Thyroid gland (tissue), 4 donors: ENCODE measurements at regions of chr17 and their contacts with region 1.

Region 1: GRCh38 chr17:4891411-4892342 is 7.7 kb upstream of the C17orf107 start:
- DNase-seq: no peak
- H3K4me3 ChIP-seq: no peak overlapping the region
- H3K27ac ChIP-seq: no peak overlapping the region
- H3K4me1 ChIP-seq: no peaks in the 10 kb centered on the region
- H3K27me3 ChIP-seq: no peaks in the 10 kb centered on the region
- CTCF ChIP-seq: no peak
- POLR2A ChIP-seq: no peak

Region 2: DNA sequence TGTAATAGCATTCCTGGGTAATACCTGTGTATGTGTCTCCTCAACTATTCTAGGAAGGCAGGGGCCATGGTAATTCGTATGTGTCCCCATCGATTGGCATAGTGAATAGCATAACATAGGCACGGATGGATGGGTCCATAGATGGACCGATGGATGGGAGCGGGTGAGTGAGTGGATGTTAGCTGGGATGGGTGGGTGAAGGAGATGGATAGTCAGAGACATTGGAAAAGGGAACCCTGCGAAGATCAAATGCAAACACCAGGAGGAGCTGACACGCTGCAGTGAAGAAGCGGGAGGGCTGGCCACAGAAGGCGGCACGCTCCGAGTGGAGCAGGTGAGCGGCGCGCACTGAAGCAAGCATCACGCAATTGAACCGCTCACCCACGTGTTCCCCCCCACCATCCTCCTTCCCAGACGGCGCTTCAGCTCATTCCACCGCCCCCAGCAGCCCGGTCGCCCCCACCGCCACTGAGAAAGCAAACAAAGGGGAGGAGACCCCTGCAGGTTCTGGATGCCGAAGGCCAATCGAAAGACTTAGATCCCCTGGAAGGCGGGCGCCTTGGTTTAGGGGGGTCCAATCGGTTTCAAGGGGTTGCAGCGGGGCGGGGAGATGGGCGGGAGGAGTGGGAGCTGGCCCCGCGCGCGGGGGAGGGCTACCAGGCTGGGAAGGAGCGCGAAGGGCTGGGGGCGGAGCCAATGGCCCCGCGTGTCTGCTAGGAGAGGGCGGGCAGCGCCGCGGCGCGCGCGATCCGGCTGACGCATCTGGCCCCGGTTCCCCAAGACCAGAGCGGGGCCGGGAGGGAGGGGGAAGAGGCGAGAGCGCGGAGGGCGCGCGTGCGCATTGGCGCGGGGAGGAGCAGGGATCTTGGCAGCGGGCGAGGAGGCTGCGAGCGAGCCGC is 181.6 kb before region 1 on chr17 and contains the start of gene ARRB2:
- intact Hi-C with region 1: loop called (anchors 5 kb)
- DNase-seq: peak; percentile 98 to 99
- H3K4me3 ChIP-seq: peak within 1 kb of the TSS in 2 of 3 donors; percentile 48 to 59
- H3K27ac ChIP-seq: peak within 1 kb of the TSS; percentile 42 to 81 (median 68)
- H3K4me1 ChIP-seq: peaks cover 7 to 8% of the 10 kb centered on the region in 2 donors
- H3K27me3 ChIP-seq: no peaks in the 10 kb centered on the region
- CTCF ChIP-seq: peak; percentile 27 to 72 (median 63)
- POLR2A ChIP-seq: peak in 1 of 2 donors; percentile 42
- total RNA-seq, gene ARRB2: 8.4 to 20.6 (median 14.4) TPM

Region 3: DNA sequence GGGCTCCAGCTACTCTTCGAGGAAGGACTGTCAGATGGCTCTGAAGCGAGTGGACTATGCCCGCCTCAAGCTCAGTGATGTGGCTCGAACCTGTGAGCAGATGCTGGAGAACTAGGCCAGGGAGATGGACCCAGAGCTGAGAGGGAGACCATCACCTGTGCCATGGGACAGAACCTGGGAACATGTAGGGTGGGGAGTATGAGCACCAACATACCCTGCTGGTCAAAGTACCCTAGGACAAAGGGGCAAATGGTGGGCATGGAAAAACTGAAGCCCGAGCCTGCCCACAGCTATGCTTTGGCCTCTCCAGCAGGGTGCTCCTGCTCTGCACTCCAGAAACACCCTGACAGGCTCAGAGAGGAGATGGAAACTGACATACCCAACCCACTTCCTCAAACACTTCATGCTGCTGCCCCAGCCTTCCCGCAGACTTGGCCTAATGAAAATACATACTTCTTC is 158.6 kb before region 1 on chr17:
- intact Hi-C with region 1: loop called (anchors 5 kb)
- DNase-seq: no peak
- H3K4me3 ChIP-seq: no peak overlapping the region
- H3K27ac ChIP-seq: no peak overlapping the region
- H3K4me1 ChIP-seq: peaks cover 8 to 11% of the 10 kb centered on the region in 2 donors
- H3K27me3 ChIP-seq: no peaks in the 10 kb centered on the region
- CTCF ChIP-seq: no peak
- POLR2A ChIP-seq: no peak

Region 4: DNA sequence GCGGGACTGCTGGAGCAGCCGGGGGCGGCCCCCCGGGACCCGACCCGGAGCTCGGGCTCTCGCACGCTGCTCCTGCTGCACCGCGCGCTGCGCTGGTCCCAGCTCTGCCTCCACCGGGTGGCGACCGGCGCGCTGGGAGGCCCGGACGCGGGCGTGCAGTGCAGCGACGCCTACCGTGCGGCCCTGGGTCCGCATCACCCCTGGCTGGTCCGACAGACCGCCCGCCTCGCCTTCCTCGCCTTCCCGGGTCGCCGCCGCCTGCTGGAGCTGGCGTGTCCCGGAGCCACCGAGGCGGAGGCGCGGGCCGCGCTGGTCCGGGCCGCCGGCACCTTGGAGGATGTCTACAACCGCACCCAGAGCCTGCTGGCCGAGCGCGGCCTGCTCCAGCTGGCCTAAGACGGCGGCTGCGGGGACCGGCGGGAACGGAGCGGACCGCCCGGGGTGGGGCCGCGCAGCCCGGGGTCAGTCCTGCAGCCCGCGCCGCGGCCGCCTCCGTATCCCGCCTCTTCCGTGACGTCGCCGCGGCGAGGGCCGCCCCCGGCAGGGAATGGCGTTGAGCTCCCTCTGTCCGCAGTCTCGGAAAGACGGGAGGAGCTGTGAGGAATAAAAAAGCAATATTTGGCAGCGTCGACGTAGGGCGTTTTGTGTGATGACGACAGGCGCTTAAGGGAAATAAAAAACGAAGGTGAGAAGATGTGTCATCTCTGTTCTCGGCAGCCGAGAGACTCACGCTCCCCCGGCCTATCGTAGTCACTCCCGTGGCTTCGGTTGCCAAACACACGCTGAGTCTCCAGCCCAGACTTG is 101.6 kb before region 1 on chr17:
- intact Hi-C with region 1: loop called (anchors 2 kb)
- DNase-seq: peak; percentile 79 to 80
- H3K4me3 ChIP-seq: peak overlapping the region; percentile 40 to 63 (median 59)
- H3K27ac ChIP-seq: peak overlapping the region; percentile 83 to 95 (median 85)
- H3K4me1 ChIP-seq: peaks cover 15 to 30% of the 10 kb centered on the region in 2 donors
- H3K27me3 ChIP-seq: peaks cover 3% of the 10 kb centered on the region
- CTCF ChIP-seq: peak; percentile 24 to 85 (median 66)
- POLR2A ChIP-seq: peak in 1 of 2 donors; percentile 85